ENCODE measurements at regions of chr1 and their contacts with region 1.

Region 1: DNA sequence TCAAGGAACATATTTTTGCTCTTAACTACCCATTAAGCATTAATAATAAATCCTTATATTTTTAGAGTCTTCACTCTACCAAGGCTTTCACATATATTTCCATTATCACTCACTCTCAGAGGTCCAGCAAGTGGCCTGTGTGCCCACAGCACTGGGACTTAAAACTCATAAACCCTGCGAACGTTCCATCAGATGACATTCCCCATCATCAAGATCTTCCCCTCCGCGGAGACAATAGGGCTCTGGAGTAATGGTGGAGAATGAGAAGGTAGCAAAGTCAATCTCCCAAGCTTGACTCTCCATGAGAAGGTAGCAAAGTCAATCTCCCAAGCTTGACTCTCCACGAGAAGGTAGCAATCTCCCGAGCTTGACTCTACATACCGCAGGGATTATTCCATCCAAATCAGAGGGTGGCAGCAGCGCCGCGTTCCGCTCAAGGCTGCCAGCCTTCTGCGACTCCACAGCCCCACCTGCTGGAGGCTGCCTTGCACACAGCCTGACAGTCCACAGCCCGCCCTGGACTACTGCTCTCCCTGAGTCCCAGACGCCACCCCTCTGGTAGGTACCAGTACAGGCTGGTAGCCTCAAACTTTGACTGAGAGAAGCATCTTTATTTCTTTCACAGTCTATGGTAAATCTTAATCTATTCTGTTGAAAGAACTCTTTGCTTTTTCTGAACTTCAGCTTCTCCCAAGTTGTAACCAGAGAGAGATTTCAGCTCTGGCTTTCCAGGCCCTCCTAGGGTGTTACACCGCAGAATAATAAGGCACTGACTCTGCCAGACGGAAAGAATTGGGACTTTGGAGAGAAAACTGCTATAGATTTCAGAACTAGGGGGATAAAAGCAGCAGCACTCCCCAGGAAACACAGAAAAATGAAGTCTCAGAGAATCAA is 26.4 kb upstream of the CTTNBP2NL start:
- DNase-seq: peak; percentile 95
- ATAC-seq: peak; percentile 100
- H3K4me3 Mint-ChIP-seq: no peak overlapping the region
- H3K27ac Mint-ChIP-seq: no peak overlapping the region
- H3K4me1 Mint-ChIP-seq: 0 out of 2 replicates have a peak, but pooled peaks cover 2% of the 10 kb centered on the region
- H3K27me3 Mint-ChIP-seq: peaks cover 10% of the 10 kb centered on the region
- CTCF ChIP-seq: peak; percentile 92

Region 2: GRCh38 chr1:112358798-112359408 is 10.7 kb before region 1 on chr1:
- CTCF ChIA-PET with region 1: interaction called, 67 read pairs
- POLR2A ChIA-PET with region 1: no interaction called
- DNase-seq: peak; percentile 77
- ATAC-seq: peak; percentile 97
- H3K4me3 Mint-ChIP-seq: no peak overlapping the region
- H3K27ac Mint-ChIP-seq: no peak overlapping the region
- H3K4me1 Mint-ChIP-seq: peaks cover 18% of the 10 kb centered on the region
- H3K27me3 Mint-ChIP-seq: peaks cover 8% of the 10 kb centered on the region
- CTCF ChIP-seq: peak; percentile 60

Region 3: DNA sequence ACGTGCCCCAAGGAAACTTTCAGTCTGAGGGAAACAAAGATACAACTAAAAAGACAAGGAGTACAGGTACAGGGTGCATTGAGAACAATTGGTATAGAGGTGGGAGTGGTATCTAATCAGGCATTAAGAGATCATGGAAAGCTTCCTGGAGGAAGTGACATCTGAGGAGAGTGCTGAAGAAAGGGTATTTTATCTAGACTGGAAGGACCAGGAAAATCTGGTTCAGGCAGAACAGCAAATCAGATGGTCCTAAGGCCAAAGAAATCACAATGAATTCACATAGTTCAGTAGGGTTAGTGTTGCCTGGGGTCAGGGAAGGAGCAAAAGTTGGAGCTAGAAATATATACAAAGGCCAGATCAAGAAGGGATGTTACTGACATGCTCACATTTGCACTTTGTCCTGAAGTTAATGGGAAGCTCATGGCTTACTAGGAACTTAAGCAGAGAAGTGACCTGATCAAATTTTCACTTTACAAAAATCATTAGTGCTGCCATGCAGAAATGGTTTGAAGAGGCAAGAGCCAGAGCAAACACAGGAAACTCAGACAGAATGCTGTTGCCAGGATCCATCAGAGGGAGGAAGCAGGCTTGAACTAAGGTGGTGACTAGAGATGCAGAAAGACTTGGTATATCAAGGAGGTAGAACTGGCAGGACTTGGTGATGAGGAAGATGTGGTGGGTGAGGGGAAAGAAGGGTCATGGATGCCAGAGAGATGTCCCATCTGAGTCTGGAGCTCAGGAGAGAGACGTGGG is 11.9 kb after region 1 on chr1:
- CTCF ChIA-PET with region 1: interaction called, 10 read pairs
- POLR2A ChIA-PET with region 1: no interaction called
- DNase-seq: no peak
- ATAC-seq: no peak
- H3K4me3 Mint-ChIP-seq: no peak overlapping the region
- H3K27ac Mint-ChIP-seq: no peak overlapping the region
- H3K4me1 Mint-ChIP-seq: 0 out of 2 replicates have a peak, but pooled peaks cover 3% of the 10 kb centered on the region
- H3K27me3 Mint-ChIP-seq: peaks cover 3% of the 10 kb centered on the region
- CTCF ChIP-seq: no peak

Region 4: GRCh38 chr1:112423207-112423606 is 53.6 kb after region 1 on chr1:
- CTCF ChIA-PET with region 1: no interaction called
- POLR2A ChIA-PET with region 1: no interaction called
- DNase-seq: no peak
- ATAC-seq: no peak
- H3K4me3 Mint-ChIP-seq: no peak overlapping the region
- H3K27ac Mint-ChIP-seq: no peak overlapping the region
- H3K4me1 Mint-ChIP-seq: peaks cover 9% of the 10 kb centered on the region
- H3K27me3 Mint-ChIP-seq: no peaks in the 10 kb centered on the region
- CTCF ChIP-seq: no peak

Region 5: DNA sequence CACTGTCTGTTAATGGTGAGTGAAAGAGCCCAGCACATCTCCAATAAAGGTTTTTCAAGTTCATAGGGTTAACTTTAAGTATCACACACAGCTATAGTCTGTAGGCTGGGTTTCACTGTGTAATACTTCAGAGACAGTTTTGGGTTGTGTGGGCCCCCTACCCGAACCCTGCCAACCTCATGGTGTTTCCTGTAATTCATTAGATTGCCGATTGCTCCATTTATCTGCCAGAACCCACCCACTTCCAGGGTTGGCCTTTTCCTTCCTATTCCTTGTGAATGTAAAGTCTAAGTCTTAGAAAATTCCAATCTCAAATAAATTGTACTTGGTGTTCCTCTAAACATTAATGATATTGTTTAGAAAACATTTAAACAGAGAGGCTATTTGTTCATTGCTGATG is 70.0 kb after region 1 on chr1:
- CTCF ChIA-PET with region 1: no interaction called
- POLR2A ChIA-PET with region 1: no interaction called
- DNase-seq: no peak
- ATAC-seq: no peak
- H3K4me3 Mint-ChIP-seq: no peak overlapping the region
- H3K27ac Mint-ChIP-seq: no peak overlapping the region
- H3K4me1 Mint-ChIP-seq: no peaks in the 10 kb centered on the region
- H3K27me3 Mint-ChIP-seq: no peaks in the 10 kb centered on the region
- CTCF ChIP-seq: no peak